ENCODE measurements at regions of chr7 and their contacts with region 1.

Region 1: GRCh38 chr7:157339777-157340677 is 3.2 kb downstream of the DNAJB6 start:
- DNase-seq: peak; percentile 69 to 75
- ATAC-seq: peak in 1 of 2 experiments; percentile 35; a peak in 3 of 6 replicates
- H3K4me3 ChIP-seq: no peak overlapping the region
- H3K27ac ChIP-seq: peak overlapping the region in 1 of 2 experiments; percentile 9; a peak in 1 of 6 replicates
- H3K4me1 ChIP-seq: peaks cover 28% of the 10 kb centered on the region
- CTCF ChIP-seq: peak; percentile 80
- EP300 ChIP-seq: no peak
- POLR2A ChIP-seq: no peak
- RAD21 ChIP-seq: peak; percentile 69 to 73

Region 2: DNA sequence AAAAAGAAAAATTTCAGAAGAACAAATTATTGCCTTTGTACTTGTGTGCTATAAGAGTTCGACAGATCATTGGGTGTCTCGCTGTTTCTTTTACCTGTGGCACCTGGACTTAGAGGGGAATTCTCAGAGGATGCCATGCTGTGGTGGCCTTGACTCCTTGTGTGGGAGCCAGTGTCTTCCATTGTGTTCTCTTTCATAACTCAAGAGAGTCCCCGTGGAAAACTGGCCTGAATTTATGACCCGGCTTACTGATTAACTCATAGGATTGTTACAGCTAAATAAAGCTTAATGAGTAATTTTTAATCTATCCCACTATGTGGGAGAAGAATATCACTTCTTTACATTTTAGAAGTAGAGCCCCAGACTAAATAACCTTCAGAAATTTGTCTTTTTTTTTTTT is 146.8 kb before region 1 on chr7:
- CTCF ChIA-PET with region 1: no interaction called
- POLR2A ChIA-PET with region 1: no interaction called
- DNase-seq: no peak
- ATAC-seq: no peak
- H3K4me3 ChIP-seq: no peak overlapping the region
- H3K27ac ChIP-seq: no peak overlapping the region
- H3K4me1 ChIP-seq: peaks cover 13% of the 10 kb centered on the region
- CTCF ChIP-seq: no peak
- EP300 ChIP-seq: no peak
- POLR2A ChIP-seq: no peak
- RAD21 ChIP-seq: no peak

Region 3: DNA sequence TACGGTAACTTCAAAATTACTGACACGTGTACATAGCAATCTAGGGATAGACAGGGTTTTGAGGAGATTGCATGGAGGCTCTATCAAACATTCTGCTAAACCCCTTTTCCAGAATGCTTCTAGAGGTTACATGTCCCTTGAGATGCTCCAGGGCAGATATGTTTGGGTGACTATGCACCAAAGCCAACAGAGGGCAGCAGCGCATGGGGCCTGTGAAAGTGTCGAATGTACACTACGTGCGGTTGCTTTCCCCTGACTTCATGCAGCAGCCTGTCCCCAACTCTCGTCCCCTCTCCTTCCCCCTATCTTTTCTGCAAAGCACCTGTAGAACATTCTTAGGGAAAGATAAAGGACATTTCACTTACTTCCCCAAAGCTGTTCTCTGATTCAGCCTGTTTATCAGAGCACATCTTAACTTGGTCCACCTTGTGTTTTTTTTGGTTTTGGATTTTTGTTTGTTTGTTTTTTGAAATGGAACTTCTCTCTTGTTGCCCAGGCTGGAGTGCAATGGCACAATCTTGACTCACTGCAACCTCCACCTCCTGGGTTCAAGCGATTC is 111.1 kb before region 1 on chr7:
- CTCF ChIA-PET with region 1: interaction called, 15 read pairs
- POLR2A ChIA-PET with region 1: no interaction called
- DNase-seq: peak; percentile 21 to 53
- ATAC-seq: peak; percentile 90 to 94
- H3K4me3 ChIP-seq: no peak overlapping the region
- H3K27ac ChIP-seq: no peak overlapping the region
- H3K4me1 ChIP-seq: no peaks in the 10 kb centered on the region
- CTCF ChIP-seq: peak; percentile 42
- EP300 ChIP-seq: no peak
- POLR2A ChIP-seq: no peak
- RAD21 ChIP-seq: peak in 1 of 2 experiments; percentile 55; a peak in 3 of 5 replicates

Region 4: GRCh38 chr7:157253850-157254249 is 86.2 kb before region 1 on chr7:
- CTCF ChIA-PET with region 1: no interaction called
- POLR2A ChIA-PET with region 1: no interaction called
- DNase-seq: peak in 1 of 2 experiments; percentile 35
- ATAC-seq: no peak
- H3K4me3 ChIP-seq: no peak overlapping the region
- H3K27ac ChIP-seq: no peak overlapping the region
- H3K4me1 ChIP-seq: no peaks in the 10 kb centered on the region
- CTCF ChIP-seq: no peak
- EP300 ChIP-seq: no peak
- POLR2A ChIP-seq: no peak
- RAD21 ChIP-seq: no peak

Region 5: GRCh38 chr7:157301610-157302120 is 38.4 kb before region 1 on chr7:
- CTCF ChIA-PET with region 1: interaction called, 16 read pairs
- POLR2A ChIA-PET with region 1: interaction called, 9 read pairs
- DNase-seq: no peak
- ATAC-seq: no peak
- H3K4me3 ChIP-seq: no peak overlapping the region
- H3K27ac ChIP-seq: peak overlapping the region in 1 of 2 experiments; percentile 34; a peak in 2 of 6 replicates
- H3K4me1 ChIP-seq: peaks cover 21% of the 10 kb centered on the region
- CTCF ChIP-seq: no peak
- EP300 ChIP-seq: no peak
- POLR2A ChIP-seq: no peak
- RAD21 ChIP-seq: no peak

Region 6: DNA sequence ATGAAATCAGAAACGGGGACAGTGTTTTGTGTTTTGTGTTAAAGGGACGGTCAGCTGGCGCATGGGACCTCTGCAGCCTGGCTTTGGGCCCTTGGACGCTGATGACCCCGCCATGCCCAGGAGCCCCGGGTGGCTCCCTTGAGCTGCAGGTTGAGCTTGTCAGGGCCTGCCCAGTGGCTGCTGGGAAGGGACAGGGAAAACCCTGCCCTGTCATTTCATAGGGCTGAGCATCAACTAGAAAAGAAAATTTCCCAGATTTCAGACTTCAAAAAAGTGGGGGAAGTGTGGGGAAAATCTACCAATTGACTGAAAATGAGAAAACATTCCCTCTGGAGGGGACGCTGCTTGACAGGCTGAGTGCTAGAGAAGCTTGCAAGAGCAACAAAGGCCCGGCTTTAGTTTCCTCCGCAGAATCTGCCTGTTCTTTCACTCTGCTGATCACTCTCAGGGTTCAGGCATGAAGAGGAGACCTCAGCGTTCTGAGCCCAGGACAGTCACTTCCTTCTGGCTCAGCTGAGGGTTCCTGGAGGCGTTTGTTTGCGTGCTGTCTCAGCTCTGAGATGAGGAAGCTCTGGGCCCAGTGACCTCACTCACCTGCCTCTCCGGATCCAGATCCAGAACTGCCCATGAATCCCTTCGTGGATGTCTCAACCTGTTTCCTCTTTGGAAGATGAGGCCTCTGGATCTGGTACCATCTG is 21.9 kb before region 1 on chr7:
- CTCF ChIA-PET with region 1: interaction called, 16 read pairs
- POLR2A ChIA-PET with region 1: interaction called, 4 read pairs
- DNase-seq: no peak
- ATAC-seq: peak; percentile 61 to 68; a peak in 4 of 6 replicates
- H3K4me3 ChIP-seq: no peak overlapping the region
- H3K27ac ChIP-seq: peak overlapping the region; percentile 11 to 72; a peak in 3 of 6 replicates
- H3K4me1 ChIP-seq: peaks cover 14% of the 10 kb centered on the region
- CTCF ChIP-seq: no peak
- EP300 ChIP-seq: no peak
- POLR2A ChIP-seq: no peak
- RAD21 ChIP-seq: no peak

Region 7: DNA sequence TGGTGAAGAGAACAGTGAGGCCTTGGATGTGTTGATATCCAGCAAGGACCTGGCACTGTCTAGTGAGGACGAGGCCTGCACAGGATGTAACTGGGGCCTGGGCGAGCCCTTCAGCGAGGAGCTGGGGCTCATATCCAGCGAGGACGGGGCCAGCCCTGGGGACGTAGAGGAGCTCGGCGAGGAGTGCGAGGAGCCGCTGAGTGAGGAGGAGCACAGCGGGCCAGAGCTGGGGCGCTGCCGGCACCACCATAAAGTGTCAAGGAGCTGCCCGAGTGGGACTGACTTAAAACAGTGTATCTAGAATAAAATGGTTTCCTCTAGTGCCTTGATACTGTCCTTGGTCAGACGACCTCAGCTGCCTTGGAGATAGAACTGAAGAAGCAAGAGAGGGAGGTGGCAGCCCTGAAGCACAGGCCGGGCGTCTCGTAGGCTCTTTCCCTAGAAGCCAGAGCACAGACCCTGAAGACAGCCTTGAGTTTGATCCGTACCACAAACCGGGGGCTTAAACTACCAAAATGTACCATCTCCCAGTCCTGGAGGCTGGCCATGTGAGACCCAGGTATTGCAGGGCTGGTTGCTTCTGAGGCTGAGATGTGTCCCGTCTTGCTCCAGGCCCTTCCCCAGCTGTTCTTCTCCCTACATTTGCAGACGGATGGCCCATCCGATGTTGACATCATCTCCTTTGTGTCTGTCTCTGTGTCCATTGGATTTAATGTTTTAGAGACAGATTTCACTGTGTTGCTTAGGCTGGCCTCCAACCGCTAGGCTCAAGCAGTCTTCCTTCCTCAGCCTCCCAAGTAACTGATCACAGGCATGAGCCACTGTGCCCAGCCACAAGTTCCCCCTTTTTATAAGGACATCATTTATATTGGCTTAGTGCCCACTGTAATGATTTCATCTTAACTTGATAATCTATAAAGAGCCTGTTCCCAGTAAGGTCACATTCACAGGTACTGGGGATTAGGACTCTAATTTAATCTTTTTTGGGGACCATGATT is 32.5 kb after region 1 on chr7:
- CTCF ChIA-PET with region 1: interaction called, 10 read pairs
- POLR2A ChIA-PET with region 1: no interaction called
- DNase-seq: no peak
- ATAC-seq: peak; percentile 26 to 48
- H3K4me3 ChIP-seq: no peak overlapping the region
- H3K27ac ChIP-seq: no peak overlapping the region
- H3K4me1 ChIP-seq: no peaks in the 10 kb centered on the region
- CTCF ChIP-seq: no peak
- EP300 ChIP-seq: no peak
- POLR2A ChIP-seq: no peak
- RAD21 ChIP-seq: no peak

Measured in A549 (cell line).